H1 (cell line): ENCODE measurements at regions of chr10 and their contacts with region 1.

Region 1: GRCh38 chr10:118594392-118595063 is 920 bp downstream of the PRLHR start:
- DNase-seq: peak; percentile 90 to 93
- H3K4me3 ChIP-seq: peak overlapping the region in 3 of 4 experiments; percentile 6 to 60 (median 26); a peak in 4 of 8 replicates
- H3K27ac ChIP-seq: no peak overlapping the region
- H3K4me1 ChIP-seq: peaks cover 0 to 17% (median 12%) of the 10 kb centered on the region in 4 experiments; a peak in 5 of 7 replicates
- H3K27me3 ChIP-seq: peaks cover 17 to 41% (median 33%) of the 10 kb centered on the region in 4 experiments
- CTCF ChIP-seq: peak; percentile 85 to 98 (median 91)
- EP300 ChIP-seq: peak in 1 of 2 experiments; percentile 63; a peak in 1 of 3 replicates
- POLR2A ChIP-seq: no peak
- RAD21 ChIP-seq: peak; percentile 77 to 85

Region 2: GRCh38 chr10:118264838-118265510 is 329.6 kb before region 1 on chr10:
- CTCF ChIA-PET with region 1: no interaction called
- POLR2A ChIA-PET with region 1: no interaction called
- DNase-seq: no peak
- H3K4me3 ChIP-seq: no peak overlapping the region
- H3K27ac ChIP-seq: no peak overlapping the region
- H3K4me1 ChIP-seq: peaks cover 0 to 5% (median 0%) of the 10 kb centered on the region in 4 experiments; a peak in 1 of 7 replicates
- H3K27me3 ChIP-seq: peaks cover 35 to 81% (median 58%) of the 10 kb centered on the region in 4 experiments
- CTCF ChIP-seq: peak in 2 of 3 experiments; percentile 15 to 44; a peak in 2 of 4 replicates
- EP300 ChIP-seq: no peak
- POLR2A ChIP-seq: no peak
- RAD21 ChIP-seq: peak; percentile 19 to 34; a peak in 2 of 4 replicates

Region 3: DNA sequence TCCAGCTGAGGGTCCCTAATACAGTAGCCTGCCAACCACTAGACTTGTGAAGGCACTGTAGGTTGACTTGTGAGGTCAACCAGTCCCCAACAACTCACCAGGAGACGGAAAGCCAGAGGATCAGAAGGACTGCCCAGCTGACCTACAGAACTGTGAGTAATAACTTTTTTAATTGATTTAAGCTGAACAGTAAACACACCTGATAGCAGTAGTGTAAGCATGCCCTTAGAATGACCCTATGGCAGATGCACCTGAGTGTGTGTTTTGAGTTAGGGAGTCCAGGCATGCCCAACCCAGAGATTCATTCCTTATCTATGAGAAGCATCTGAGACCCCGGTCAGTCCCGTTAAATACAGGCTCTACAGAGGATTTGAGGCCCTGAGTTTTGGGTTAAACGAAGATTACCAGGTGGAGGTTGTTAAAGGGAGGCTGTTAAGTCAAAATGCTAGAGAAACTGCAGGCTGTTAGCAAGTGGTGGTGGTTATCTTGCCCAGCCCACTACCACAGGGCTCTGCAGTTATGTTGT is 13.1 kb before region 1 on chr10:
- CTCF ChIA-PET with region 1: interaction called, 12 read pairs
- POLR2A ChIA-PET with region 1: no interaction called
- DNase-seq: no peak
- H3K4me3 ChIP-seq: no peak overlapping the region
- H3K27ac ChIP-seq: no peak overlapping the region
- H3K4me1 ChIP-seq: no peaks in the 10 kb centered on the region
- H3K27me3 ChIP-seq: peaks cover 0 to 3% (median 0%) of the 10 kb centered on the region in 4 experiments; a peak in 1 of 7 replicates
- CTCF ChIP-seq: no peak
- EP300 ChIP-seq: no peak
- POLR2A ChIP-seq: no peak
- RAD21 ChIP-seq: no peak

Region 4: DNA sequence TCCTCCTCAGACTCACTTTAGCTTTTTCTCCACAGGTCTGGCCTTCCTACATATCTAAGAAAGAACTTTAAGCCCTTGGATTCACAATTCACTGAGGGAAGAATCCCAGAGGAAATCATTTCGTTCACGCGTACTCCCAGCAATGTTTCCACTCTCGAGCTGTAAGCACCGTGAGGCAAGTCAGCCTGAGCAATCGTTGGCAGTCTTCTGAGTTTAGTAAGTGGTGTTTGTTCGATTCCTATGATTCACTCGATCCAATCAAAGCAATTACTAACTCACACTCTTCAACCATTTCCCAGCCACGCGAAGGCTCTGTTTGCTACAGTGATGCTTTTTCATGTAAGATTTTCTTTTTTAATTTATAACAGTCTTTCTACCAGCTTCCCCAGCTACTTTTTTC is 11.2 kb after region 1 on chr10:
- CTCF ChIA-PET with region 1: interaction called, 10 read pairs
- POLR2A ChIA-PET with region 1: no interaction called
- DNase-seq: no peak
- H3K4me3 ChIP-seq: no peak overlapping the region
- H3K27ac ChIP-seq: no peak overlapping the region
- H3K4me1 ChIP-seq: no peaks in the 10 kb centered on the region
- H3K27me3 ChIP-seq: 0 out of 7 replicates have a peak, but pooled peaks cover 0 to 2% (median 0%) of the 10 kb centered on the region in 4 experiments
- CTCF ChIP-seq: no peak
- EP300 ChIP-seq: no peak
- POLR2A ChIP-seq: no peak
- RAD21 ChIP-seq: no peak

Region 5: DNA sequence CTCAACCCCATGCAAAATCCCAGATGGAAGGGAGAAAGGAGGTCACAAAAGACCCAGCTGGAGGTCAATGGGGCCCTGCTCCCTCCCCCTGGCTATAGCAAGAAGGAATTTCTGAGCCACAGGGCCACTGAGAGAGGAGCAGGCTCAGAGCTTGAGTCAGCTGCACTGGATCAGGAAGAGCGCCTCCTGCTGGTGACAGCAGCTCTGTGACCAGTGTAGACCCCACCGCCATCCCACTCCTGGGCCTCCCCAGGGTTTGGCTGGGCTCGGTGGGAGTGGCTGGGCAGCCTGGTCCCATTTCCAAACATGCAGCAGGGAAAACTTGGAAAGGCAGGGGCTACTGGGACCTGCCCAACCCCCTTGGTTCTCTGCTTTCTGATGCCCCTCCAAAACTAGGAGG is 32.4 kb after region 1 on chr10:
- CTCF ChIA-PET with region 1: interaction called, 10 read pairs
- POLR2A ChIA-PET with region 1: no interaction called
- DNase-seq: peak in 1 of 2 experiments; percentile 49
- H3K4me3 ChIP-seq: no peak overlapping the region
- H3K27ac ChIP-seq: no peak overlapping the region
- H3K4me1 ChIP-seq: peaks cover 0 to 7% (median 3%) of the 10 kb centered on the region in 4 experiments; a peak in 2 of 7 replicates
- H3K27me3 ChIP-seq: no peaks in the 10 kb centered on the region
- CTCF ChIP-seq: peak; percentile 51 to 75 (median 71)
- EP300 ChIP-seq: no peak
- POLR2A ChIP-seq: no peak
- RAD21 ChIP-seq: peak; percentile 16 to 44; a peak in 3 of 4 replicates

Region 6: GRCh38 chr10:118669020-118669791 is 74.7 kb after region 1 on chr10:
- CTCF ChIA-PET with region 1: interaction called, 23 read pairs
- POLR2A ChIA-PET with region 1: interaction called, 4 read pairs
- DNase-seq: no peak
- H3K4me3 ChIP-seq: no peak overlapping the region
- H3K27ac ChIP-seq: no peak overlapping the region
- H3K4me1 ChIP-seq: no peaks in the 10 kb centered on the region; a peak in 1 of 7 replicates
- H3K27me3 ChIP-seq: no peaks in the 10 kb centered on the region
- CTCF ChIP-seq: no peak
- EP300 ChIP-seq: no peak
- POLR2A ChIP-seq: no peak
- RAD21 ChIP-seq: no peak

Region 7: GRCh38 chr10:118720685-118721538 is 126.4 kb after region 1 on chr10:
- CTCF ChIA-PET with region 1: interaction called, 15 read pairs
- POLR2A ChIA-PET with region 1: no interaction called
- DNase-seq: peak in 1 of 2 experiments; percentile 73
- H3K4me3 ChIP-seq: no peak overlapping the region
- H3K27ac ChIP-seq: no peak overlapping the region
- H3K4me1 ChIP-seq: no peaks in the 10 kb centered on the region
- H3K27me3 ChIP-seq: no peaks in the 10 kb centered on the region
- CTCF ChIP-seq: peak in 2 of 3 experiments; percentile 43 to 55; a peak in 2 of 4 replicates
- EP300 ChIP-seq: no peak
- POLR2A ChIP-seq: no peak
- RAD21 ChIP-seq: peak; percentile 63 to 64